ENCODE measurements at regions of chr1 and their contacts with region 1.

Region 1: GRCh38 chr1:84772428-84772943 is 82.2 kb upstream of the SSX2IP start:
- DNase-seq: peak; percentile 66 to 70
- ATAC-seq: peak; percentile 68 to 88 (median 76)
- H3K4me3 ChIP-seq: no peak overlapping the region
- H3K27ac ChIP-seq: no peak overlapping the region
- H3K4me1 ChIP-seq: no peaks in the 10 kb centered on the region
- H3K27me3 ChIP-seq: no peaks in the 10 kb centered on the region
- CTCF ChIP-seq: peak; percentile 92

Region 2: DNA sequence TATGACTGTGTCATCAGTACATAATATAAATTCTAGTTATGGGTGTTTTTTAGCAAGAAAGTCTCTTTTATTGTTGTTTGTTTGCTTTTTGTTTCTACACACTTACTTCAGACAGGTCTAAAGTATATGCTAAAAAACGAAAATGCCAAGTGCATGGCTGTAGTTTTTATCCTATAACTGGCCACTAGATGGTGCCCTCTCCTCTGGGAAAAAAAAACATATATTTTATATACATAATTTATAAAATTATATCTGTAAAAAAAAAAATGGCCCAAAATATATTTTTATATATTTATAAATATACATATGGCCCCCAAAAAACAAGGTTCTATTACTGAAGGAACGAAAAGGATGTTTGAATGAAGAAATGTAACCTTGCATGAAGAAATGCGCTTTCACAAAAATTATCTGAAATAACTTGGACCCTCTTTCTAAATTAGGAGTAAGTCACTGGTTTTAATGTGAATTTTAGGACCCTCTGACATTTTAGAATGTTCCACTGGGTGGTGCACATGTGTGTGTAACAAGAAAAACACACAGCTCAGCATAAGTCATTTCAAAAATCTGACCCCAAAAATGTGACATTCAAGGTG is 867.1 kb before region 1 on chr1:
- intact Hi-C with region 1: loop called (anchors 10 kb)
- DNase-seq: no peak
- ATAC-seq: no peak
- H3K4me3 ChIP-seq: no peak overlapping the region
- H3K27ac ChIP-seq: no peak overlapping the region
- H3K4me1 ChIP-seq: no peaks in the 10 kb centered on the region
- H3K27me3 ChIP-seq: no peaks in the 10 kb centered on the region
- CTCF ChIP-seq: peak; percentile 65

Region 3: DNA sequence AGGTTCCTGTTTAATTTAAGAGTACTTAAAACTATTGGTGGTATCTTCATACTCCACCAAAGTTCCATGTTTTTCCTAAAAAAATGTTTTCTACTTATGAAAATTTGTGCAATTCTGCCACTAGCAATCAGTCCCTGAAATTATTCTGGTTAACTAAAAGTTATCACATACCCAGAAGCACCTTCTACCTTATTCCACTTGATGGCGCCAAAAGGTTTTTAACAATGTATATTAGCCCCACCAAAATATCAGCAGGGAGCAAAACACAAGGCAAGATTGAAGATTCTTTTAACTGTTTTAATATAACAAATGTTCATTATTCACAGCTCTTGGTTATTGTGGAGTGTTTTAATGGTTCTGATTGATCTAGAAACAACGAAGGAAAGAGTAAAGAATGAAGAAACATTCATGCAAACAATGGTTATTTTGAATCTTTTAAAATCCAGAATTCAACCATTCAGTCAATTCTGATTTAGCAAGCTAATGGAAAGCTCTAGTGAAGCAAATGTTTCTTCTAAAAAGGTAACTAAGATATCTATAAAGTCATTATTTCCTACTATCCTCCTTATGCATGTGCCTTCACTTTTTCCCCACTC is 840.7 kb before region 1 on chr1:
- intact Hi-C with region 1: loop called in 1 of 2 experiments (anchors 5 kb)
- DNase-seq: no peak
- ATAC-seq: peak; percentile 64 to 89 (median 72)
- H3K4me3 ChIP-seq: no peak overlapping the region
- H3K27ac ChIP-seq: no peak overlapping the region
- H3K4me1 ChIP-seq: peaks cover 10% of the 10 kb centered on the region
- H3K27me3 ChIP-seq: no peaks in the 10 kb centered on the region
- CTCF ChIP-seq: peak; percentile 76

Region 4: GRCh38 chr1:84442256-84442655 is 330.2 kb before region 1 on chr1:
- intact Hi-C with region 1: loop called in 1 of 2 experiments (anchors 5 kb)
- DNase-seq: no peak
- ATAC-seq: peak in 3 of 4 donors; percentile 55 to 71 (median 61)
- H3K4me3 ChIP-seq: no peak overlapping the region
- H3K27ac ChIP-seq: no peak overlapping the region
- H3K4me1 ChIP-seq: no peaks in the 10 kb centered on the region
- H3K27me3 ChIP-seq: no peaks in the 10 kb centered on the region
- CTCF ChIP-seq: peak; percentile 46

Region 5: DNA sequence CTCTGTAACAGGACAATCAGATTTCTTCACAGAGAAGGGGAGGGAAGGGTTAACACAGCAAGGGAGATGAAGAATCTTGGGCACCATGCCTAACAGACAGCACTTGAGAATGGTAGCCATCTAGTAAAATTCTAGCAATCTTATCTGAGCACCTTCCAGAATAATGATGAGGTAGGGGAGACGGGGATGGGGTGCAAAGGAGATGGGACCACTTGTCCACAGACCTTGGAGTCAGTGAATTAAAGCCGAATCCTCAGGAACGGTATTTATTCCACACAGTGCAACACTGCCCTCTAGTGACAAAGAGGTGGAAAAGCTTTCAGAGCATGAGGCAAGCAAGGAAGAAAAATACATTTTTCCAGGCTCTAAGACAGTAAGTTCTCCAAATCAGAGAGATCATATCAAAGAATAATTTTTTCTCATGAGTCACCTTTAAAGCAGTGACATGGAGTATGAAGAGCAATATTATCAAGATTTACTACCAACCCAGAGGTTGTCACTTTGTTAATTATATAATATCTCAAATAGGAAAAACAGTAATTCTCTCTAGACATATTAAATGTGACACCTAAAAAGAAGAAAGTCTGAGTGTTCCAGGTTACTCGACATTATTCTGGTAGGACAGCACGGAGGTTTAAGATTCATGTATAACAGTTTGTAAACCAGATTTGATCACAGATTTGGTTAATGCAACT is 163.8 kb after region 1 on chr1:
- intact Hi-C with region 1: loop called in 1 of 2 experiments (anchors 10 kb)
- DNase-seq: no peak
- ATAC-seq: peak; percentile 66 to 85 (median 73)
- H3K4me3 ChIP-seq: no peak overlapping the region
- H3K27ac ChIP-seq: no peak overlapping the region
- H3K4me1 ChIP-seq: no peaks in the 10 kb centered on the region
- H3K27me3 ChIP-seq: peaks cover 0 to 3% (median 0%) of the 10 kb centered on the region in 3 donors
- CTCF ChIP-seq: peak; percentile 89